ENCODE measurements at regions of chr2 and their contacts with region 1.

Region 1: DNA sequence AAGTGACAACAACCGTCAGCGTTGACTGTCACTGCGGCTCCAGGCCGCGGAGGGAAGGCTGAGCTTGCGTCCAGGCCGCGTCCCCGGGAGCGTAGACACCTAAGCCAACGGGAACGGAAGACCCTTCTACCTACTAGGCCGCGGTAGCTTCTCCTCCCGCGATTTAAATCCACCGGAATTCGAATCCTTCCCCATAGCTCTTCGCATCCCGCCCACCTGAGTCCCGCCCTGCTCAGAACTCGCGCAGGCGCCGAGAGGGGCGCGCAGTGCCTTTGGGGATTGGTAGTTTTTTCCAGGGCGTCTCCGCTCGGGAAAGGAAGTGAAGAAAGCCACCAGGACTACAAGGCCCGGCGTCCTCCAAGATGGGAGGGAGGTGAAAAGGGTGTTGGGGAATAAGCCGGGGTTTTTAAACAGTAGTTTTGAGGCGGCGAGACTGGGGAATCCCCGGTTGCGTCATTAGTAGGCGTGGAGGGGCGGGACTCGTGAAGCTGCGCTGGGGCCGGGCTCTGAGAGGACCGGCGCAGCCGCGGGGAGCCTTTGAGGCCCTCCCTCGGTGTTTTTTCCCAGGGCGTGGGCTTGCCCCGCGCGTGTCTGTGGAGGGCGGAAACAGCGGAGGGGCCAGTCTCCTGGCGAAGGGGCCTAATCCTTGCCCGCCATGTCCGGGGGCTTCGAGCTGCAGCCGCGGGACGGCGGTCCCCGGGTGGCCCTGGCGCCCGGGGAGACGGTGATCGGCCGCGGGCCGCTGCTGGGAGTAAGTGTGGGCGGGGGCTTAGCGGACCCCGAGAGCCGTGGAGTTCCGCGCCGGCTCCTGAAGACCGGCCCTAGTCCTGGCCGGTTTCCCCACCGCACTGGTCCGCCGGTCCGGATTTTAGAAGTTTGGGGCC is at the starts of genes APLF and FBXO48:
- DNase-seq: peak; percentile 99
- ATAC-seq: peak; percentile 95
- H3K4me3 Mint-ChIP-seq: peak within 1 kb of the TSS; percentile 92
- H3K27ac Mint-ChIP-seq: peak within 1 kb of the TSS; percentile 91
- H3K4me1 Mint-ChIP-seq: peaks cover 43% of the 10 kb centered on the region
- H3K27me3 Mint-ChIP-seq: no peaks in the 10 kb centered on the region
- CTCF ChIP-seq: no peak
- total RNA-seq, gene APLF: 2.9 to 3.5 TPM
- total RNA-seq, gene FBXO48: 1.3 to 1.4 TPM

Region 2: GRCh38 chr2:68499133-68499532 is 31.8 kb after region 1 on chr2:
- CTCF ChIA-PET with region 1: interaction called, 16 read pairs
- POLR2A ChIA-PET with region 1: no interaction called
- intact Hi-C with region 1: no loop called
- DNase-seq: no peak
- ATAC-seq: no peak
- H3K4me3 Mint-ChIP-seq: no peak overlapping the region
- H3K27ac Mint-ChIP-seq: no peak overlapping the region
- H3K4me1 Mint-ChIP-seq: no peaks in the 10 kb centered on the region
- H3K27me3 Mint-ChIP-seq: no peaks in the 10 kb centered on the region
- CTCF ChIP-seq: no peak

Region 3: GRCh38 chr2:68594674-68595492 is 127.6 kb after region 1 on chr2:
- CTCF ChIA-PET with region 1: interaction called, 63 read pairs
- POLR2A ChIA-PET with region 1: no interaction called
- intact Hi-C with region 1: no loop called
- DNase-seq: peak; percentile 71
- ATAC-seq: peak; percentile 74
- H3K4me3 Mint-ChIP-seq: no peak overlapping the region
- H3K27ac Mint-ChIP-seq: no peak overlapping the region
- H3K4me1 Mint-ChIP-seq: peaks cover 6% of the 10 kb centered on the region
- H3K27me3 Mint-ChIP-seq: peaks cover 6% of the 10 kb centered on the region
- CTCF ChIP-seq: peak; percentile 97

Region 4: DNA sequence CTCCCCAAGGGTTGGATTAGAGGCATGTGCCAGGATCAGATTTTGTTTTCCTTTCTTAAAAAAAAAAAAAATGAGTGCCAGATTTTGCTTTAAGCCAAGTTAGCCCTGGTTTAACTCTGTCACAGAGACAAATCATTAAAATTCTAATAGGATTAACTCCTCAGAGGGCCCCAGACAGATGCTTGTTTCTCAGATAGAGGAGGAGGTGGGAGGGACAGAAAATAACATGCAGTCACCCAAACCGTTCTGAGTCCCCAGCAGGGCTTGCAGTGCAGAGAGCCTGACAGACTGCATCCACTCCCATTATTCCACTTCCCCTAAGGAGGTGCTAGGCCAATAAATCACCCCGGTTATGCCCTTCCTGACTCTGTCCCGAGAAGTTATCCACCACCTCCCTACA is 169.7 kb after region 1 on chr2:
- CTCF ChIA-PET with region 1: no interaction called
- POLR2A ChIA-PET with region 1: no interaction called
- intact Hi-C with region 1: no loop called
- DNase-seq: no peak
- ATAC-seq: no peak
- H3K4me3 Mint-ChIP-seq: no peak overlapping the region
- H3K27ac Mint-ChIP-seq: no peak overlapping the region
- H3K4me1 Mint-ChIP-seq: no peaks in the 10 kb centered on the region
- H3K27me3 Mint-ChIP-seq: peaks cover 30% of the 10 kb centered on the region
- CTCF ChIP-seq: no peak

Region 5: GRCh38 chr2:68715353-68716041 is 248.2 kb after region 1 on chr2:
- CTCF ChIA-PET with region 1: interaction called, 14 read pairs
- POLR2A ChIA-PET with region 1: interaction called, 4 read pairs
- intact Hi-C with region 1: loop called (anchors 10 kb)
- DNase-seq: peak; percentile 66
- ATAC-seq: no peak
- H3K4me3 Mint-ChIP-seq: no peak overlapping the region
- H3K27ac Mint-ChIP-seq: peak overlapping the region; percentile 76
- H3K4me1 Mint-ChIP-seq: peaks cover 69% of the 10 kb centered on the region
- H3K27me3 Mint-ChIP-seq: peaks cover 2% of the 10 kb centered on the region
- CTCF ChIP-seq: peak; percentile 71

Region 6: GRCh38 chr2:68751397-68752339 is 284.3 kb after region 1 on chr2:
- CTCF ChIA-PET with region 1: interaction called, 29 read pairs
- POLR2A ChIA-PET with region 1: no interaction called
- intact Hi-C with region 1: no loop called
- DNase-seq: peak; percentile 97
- ATAC-seq: peak; percentile 90
- H3K4me3 Mint-ChIP-seq: peak overlapping the region; percentile 30
- H3K27ac Mint-ChIP-seq: peak overlapping the region; percentile 86
- H3K4me1 Mint-ChIP-seq: peaks cover 80% of the 10 kb centered on the region
- H3K27me3 Mint-ChIP-seq: no peaks in the 10 kb centered on the region
- CTCF ChIP-seq: peak; percentile 94

Region 7: GRCh38 chr2:68909793-68910674 is 442.7 kb after region 1 on chr2:
- CTCF ChIA-PET with region 1: interaction called, 60 read pairs
- POLR2A ChIA-PET with region 1: interaction called, 8 read pairs
- intact Hi-C with region 1: loop called (anchors 5 kb)
- DNase-seq: peak; percentile 92
- ATAC-seq: peak; percentile 45
- H3K4me3 Mint-ChIP-seq: no peak overlapping the region
- H3K27ac Mint-ChIP-seq: peak overlapping the region; percentile 60
- H3K4me1 Mint-ChIP-seq: peaks cover 35% of the 10 kb centered on the region
- H3K27me3 Mint-ChIP-seq: no peaks in the 10 kb centered on the region
- CTCF ChIP-seq: peak; percentile 91

Region 8: GRCh38 chr2:68943581-68944568 is 476.6 kb after region 1 on chr2:
- CTCF ChIA-PET with region 1: interaction called, 15 read pairs
- POLR2A ChIA-PET with region 1: no interaction called
- intact Hi-C with region 1: no loop called
- DNase-seq: peak; percentile 63
- ATAC-seq: peak; percentile 87
- H3K4me3 Mint-ChIP-seq: no peak overlapping the region
- H3K27ac Mint-ChIP-seq: no peak overlapping the region
- H3K4me1 Mint-ChIP-seq: no peaks in the 10 kb centered on the region
- H3K27me3 Mint-ChIP-seq: peaks cover 21% of the 10 kb centered on the region
- CTCF ChIP-seq: peak; percentile 87

Measured in activated CD8-positive, alpha-beta T cell treated with anti-CD3 and anti-CD28 coated beads for 36 hours (primary cell).